Stomach (tissue), 19 donors: ENCODE measurements at regions of chr10 and their contacts with region 1.

Region 1: GRCh38 chr10:86399879-86400704 is 33.5 kb upstream of the GRID1 start:
- DNase-seq: peak; percentile 97 to 98
- H3K4me3 ChIP-seq: peak overlapping the region; percentile 54 to 82 (median 66)
- H3K27ac ChIP-seq: peak overlapping the region; percentile 73 to 91 (median 88)
- H3K4me1 ChIP-seq: peaks cover 23 to 40% (median 38%) of the 10 kb centered on the region in 4 donors
- H3K27me3 ChIP-seq: peaks cover 0 to 27% (median 3%) of the 10 kb centered on the region in 3 donors
- CTCF ChIP-seq: peak in 5 of 7 experiments; percentile 90 to 93 (median 91)
- EP300 ChIP-seq: no peak
- POLR2A ChIP-seq: no peak

Region 2: DNA sequence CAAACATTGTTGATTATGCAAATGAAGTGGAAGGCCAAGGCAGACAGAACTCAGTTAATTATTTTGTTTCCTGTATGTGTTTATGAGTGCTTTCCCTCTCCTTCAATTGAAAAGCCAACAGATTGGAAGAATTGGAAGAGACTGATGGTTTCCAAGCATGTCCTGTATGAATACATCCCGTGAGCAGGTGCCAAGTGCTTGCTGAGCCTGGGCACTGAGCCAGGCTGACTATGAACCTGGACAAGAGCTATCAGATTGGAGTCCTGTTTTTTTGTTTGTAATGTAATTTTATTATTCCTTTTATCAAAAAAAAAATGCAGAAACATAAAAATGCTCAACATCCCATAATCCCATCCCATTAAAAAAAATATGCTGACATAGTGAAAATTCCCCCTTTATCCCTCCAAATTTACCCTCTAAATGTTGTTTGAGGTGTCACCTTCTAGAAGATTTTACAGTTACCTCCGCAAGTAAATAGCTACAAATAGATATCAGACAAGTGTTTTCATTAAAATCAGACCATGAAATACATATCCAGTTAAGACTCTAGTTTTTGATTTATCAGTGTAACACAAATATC is 483.0 kb before region 1 on chr10:
- intact Hi-C with region 1: no loop called
- DNase-seq: peak in 1 of 2 donors; percentile 41
- H3K4me3 ChIP-seq: no peak overlapping the region
- H3K27ac ChIP-seq: no peak overlapping the region
- H3K4me1 ChIP-seq: peaks cover 0 to 59% (median 13%) of the 10 kb centered on the region in 4 donors
- H3K27me3 ChIP-seq: no peaks in the 10 kb centered on the region
- CTCF ChIP-seq: no peak
- EP300 ChIP-seq: no peak
- POLR2A ChIP-seq: no peak

Region 3: GRCh38 chr10:86585037-86585725 is 185.1 kb after region 1 on chr10:
- intact Hi-C with region 1: loop called (anchors 5 kb)
- DNase-seq: peak; percentile 74 to 90
- H3K4me3 ChIP-seq: no peak overlapping the region
- H3K27ac ChIP-seq: no peak overlapping the region
- H3K4me1 ChIP-seq: peaks cover 0 to 8% (median 4%) of the 10 kb centered on the region in 4 donors
- H3K27me3 ChIP-seq: no peaks in the 10 kb centered on the region
- CTCF ChIP-seq: peak in 5 of 7 experiments; percentile 89 to 97 (median 95)
- EP300 ChIP-seq: no peak
- POLR2A ChIP-seq: no peak